Gastrocnemius medialis (tissue), 4 donors: ENCODE measurements at regions of chr10 and their contacts with region 1.

Region 1: GRCh38 chr10:19634163-19634562 is 182.1 kb upstream of the PLXDC2 start:
- DNase-seq: no peak
- ATAC-seq: no peak
- H3K4me3 ChIP-seq: no peak overlapping the region
- H3K27ac ChIP-seq: no peak overlapping the region
- H3K4me1 ChIP-seq: peaks cover 5 to 10% of the 10 kb centered on the region in 2 donors
- H3K27me3 ChIP-seq: no peaks in the 10 kb centered on the region
- CTCF ChIP-seq: no peak
- POLR2A ChIP-seq: no peak

Region 2: DNA sequence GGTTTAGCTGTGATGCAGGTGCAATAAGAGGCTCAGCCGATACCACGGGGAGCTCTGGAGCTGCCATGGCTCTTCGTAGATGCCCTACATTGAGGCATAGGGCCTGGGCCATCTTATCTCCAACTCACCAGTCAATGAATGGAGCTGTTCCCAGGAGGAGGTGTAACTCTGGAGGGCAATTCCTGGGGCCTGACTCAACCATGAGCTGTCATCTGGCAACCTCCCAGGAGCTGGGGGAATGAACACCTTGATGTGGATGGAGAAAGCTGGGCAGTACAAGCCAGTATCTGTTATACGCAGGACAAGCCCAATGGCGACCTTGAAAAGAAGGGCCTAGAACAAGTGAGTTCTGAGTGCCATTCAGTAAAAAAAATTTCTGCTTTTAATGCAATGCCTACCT is 41.9 kb before region 1 on chr10:
- in situ Hi-C with region 1: no loop called
- intact Hi-C with region 1: loop called (anchors 5 kb)
- DNase-seq: peak in 1 of 2 donors; percentile 30
- ATAC-seq: no peak
- H3K4me3 ChIP-seq: no peak overlapping the region
- H3K27ac ChIP-seq: no peak overlapping the region
- H3K4me1 ChIP-seq: peaks cover 0 to 25% of the 10 kb centered on the region in 2 donors
- H3K27me3 ChIP-seq: no peaks in the 10 kb centered on the region
- CTCF ChIP-seq: no peak
- POLR2A ChIP-seq: no peak